Heart left ventricle (tissue), 16 donors: ENCODE measurements at regions of chr5 and their contacts with region 1.

Region 1: DNA sequence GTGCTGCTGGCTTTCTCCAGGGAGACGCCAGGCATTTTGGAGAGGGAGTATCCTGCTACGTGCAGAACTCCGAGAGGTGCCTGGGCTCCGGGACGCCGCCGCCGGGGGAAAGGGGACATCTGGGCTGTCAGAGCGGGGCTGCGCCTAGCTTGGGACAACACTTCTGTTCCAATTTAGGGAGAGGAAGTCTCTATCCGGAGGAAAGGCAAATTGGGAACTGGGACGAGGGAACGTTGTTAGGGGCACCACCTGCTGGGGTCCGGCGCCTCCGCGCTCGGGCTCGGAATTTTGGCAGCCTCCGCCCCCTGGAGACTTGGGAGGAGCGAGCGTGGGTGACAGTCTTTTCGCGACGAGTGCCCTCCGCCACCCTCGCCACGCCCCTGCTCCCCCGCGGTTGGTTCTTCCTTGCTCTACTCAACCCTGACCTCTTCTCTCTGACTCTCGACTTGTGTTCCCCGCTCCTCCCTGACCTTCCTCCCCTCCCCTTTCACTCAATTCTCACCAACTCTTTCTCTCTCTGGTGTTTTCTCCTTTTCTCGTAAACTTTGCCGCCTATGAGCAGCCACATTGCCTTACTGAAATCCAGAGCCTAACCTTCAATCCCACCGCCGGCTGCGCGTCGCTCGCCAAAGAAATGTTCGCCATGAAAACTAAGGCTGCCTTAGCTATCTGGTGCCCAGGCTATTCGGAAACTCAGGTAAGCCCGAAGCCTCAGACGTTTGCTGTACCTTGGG is 1.6 kb downstream of the TSLP start:
- DNase-seq: peak; percentile 57 to 81 (median 76)
- ATAC-seq: peak; percentile 84 to 94 (median 94)
- H3K4me3 ChIP-seq: peak overlapping the region; percentile 32 to 67 (median 54)
- H3K27ac ChIP-seq: peak overlapping the region in 9 of 12 donors; percentile 17 to 64 (median 50)
- H3K4me1 ChIP-seq: peaks cover 0 to 28% (median 8%) of the 10 kb centered on the region in 12 donors
- H3K27me3 ChIP-seq: peaks cover 0 to 56% (median 22%) of the 10 kb centered on the region in 9 donors
- CTCF ChIP-seq: peak in 6 of 12 donors; percentile 8 to 35 (median 12)
- POLR2A ChIP-seq: no peak

Region 2: GRCh38 chr5:110751902-110752762 is 321.0 kb before region 1 on chr5:
- intact Hi-C with region 1: loop called in 8 of 10 experiments (anchors 2 to 10 kb)
- DNase-seq: no peak
- ATAC-seq: no peak
- H3K4me3 ChIP-seq: no peak overlapping the region
- H3K27ac ChIP-seq: no peak overlapping the region
- H3K4me1 ChIP-seq: no peaks in the 10 kb centered on the region
- H3K27me3 ChIP-seq: no peaks in the 10 kb centered on the region
- CTCF ChIP-seq: no peak
- POLR2A ChIP-seq: no peak

Region 3: DNA sequence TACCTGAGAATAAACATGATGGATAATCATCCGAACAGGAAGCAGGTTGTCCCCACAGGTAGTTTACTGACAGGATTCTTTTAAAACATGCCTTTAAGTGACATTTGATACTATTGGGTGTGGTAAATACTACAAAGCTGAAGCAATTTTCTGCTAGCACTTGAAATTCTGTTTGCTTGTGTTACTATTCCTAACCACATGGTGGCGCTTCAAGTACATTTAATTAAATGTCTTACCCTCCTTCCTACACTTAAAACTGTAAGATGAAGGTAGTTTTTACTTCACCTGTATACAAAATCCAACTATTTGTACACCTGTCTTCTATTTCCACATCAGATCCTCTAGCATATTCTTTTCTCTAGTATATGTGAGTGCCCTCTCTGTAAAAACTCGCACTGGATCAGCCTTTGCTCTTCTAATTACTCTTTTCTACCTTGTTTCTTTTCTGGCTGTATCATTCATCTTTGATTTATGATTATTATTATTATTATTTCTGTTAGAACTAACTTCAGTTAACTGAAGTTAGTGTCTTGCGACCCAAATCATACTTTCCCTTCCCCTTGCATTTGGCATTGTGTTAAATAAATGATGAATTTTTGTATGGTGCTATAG is 315.9 kb before region 1 on chr5:
- intact Hi-C with region 1: loop called in 8 of 10 experiments (anchors 2 to 10 kb)
- DNase-seq: no peak
- ATAC-seq: no peak
- H3K4me3 ChIP-seq: no peak overlapping the region
- H3K27ac ChIP-seq: no peak overlapping the region
- H3K4me1 ChIP-seq: no peaks in the 10 kb centered on the region
- H3K27me3 ChIP-seq: no peaks in the 10 kb centered on the region
- CTCF ChIP-seq: peak; percentile 60 to 80 (median 71)
- POLR2A ChIP-seq: no peak

Region 4: DNA sequence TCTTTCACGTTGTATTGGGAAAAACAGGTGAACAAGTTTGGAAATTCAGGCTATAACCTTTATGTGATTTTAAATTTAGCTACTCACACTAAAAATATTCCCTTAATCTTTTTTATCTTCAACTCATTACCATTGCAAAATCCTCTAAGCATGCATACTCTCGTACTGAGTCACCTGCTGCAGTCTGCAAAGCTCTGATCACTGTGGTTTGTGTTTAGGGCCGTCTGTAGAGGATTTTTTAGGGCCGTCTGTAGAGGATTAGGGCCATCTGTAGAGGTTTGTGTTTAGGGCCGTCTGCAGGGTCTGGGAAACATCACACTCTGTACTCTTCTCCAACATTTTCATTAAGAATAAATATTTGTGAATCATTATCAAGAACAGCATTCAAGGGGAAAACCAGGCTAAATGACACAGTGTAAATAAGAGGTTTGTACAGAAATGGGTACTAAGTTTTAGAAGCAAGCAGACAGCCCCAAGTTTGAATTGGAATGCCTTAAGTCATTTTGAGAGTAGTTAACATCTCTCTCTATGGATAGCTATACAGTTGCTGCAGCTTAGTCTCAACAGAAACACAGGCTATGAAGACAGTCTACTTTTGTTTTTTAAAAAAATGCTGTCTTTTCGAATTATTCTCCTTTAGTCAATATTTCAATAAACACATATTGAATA is 156.6 kb before region 1 on chr5:
- intact Hi-C with region 1: loop called in 1 of 10 experiments (anchors 5 kb)
- DNase-seq: no peak
- ATAC-seq: peak; percentile 77 to 87 (median 83)
- H3K4me3 ChIP-seq: no peak overlapping the region
- H3K27ac ChIP-seq: peak overlapping the region in 11 of 12 donors; percentile 52 to 85 (median 71)
- H3K4me1 ChIP-seq: peaks cover 0 to 38% (median 8%) of the 10 kb centered on the region in 12 donors
- H3K27me3 ChIP-seq: no peaks in the 10 kb centered on the region
- CTCF ChIP-seq: no peak
- POLR2A ChIP-seq: no peak

Region 5: DNA sequence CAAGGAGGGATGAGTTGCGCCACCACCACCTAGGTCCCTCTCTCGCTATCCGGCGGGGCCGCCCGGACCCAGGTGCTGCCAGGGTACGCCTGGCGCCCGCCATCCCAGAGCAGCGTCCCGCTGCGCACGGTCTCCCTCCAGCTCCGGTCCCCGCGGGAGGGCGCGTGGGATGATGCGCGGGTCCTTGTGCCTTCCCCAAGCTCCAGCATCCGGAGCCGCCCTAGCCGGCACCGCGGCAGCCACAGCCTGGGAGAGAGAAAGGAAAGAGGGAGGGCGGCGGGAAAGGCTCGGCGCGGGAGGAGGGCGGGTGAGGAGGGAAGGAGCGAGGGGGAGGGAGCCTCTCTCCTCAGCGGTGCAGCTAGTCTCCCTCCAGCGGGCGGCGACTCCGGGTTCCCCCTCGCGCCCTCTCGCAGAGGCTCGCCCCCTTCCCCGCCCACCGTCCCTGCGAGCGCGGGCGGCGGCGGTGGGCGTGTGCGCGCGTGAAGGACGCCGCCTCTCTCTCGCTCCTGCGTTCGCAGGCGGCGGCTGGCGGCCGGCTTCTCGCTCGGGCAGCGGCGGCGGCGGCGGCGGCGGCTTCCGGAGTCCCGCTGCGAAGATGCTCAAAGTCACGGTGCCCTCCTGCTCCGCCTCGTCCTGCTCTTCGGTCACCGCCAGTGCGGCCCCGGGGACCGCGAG is 150.9 kb after region 1 on chr5 and contains the start of gene CAMK4:
- intact Hi-C with region 1: no loop called
- DNase-seq: peak; percentile 54 to 79 (median 58)
- ATAC-seq: peak; percentile 47 to 91 (median 88)
- H3K4me3 ChIP-seq: peak within 1 kb of the TSS; percentile 43 to 67 (median 56)
- H3K27ac ChIP-seq: peak within 1 kb of the TSS in 2 of 12 donors; percentile 19 to 54
- H3K4me1 ChIP-seq: peaks cover 0 to 16% (median 5%) of the 10 kb centered on the region in 12 donors
- H3K27me3 ChIP-seq: peaks cover 0 to 36% (median 14%) of the 10 kb centered on the region in 9 donors
- CTCF ChIP-seq: peak in 3 of 12 donors; percentile 6 to 33 (median 32)
- POLR2A ChIP-seq: no peak
- total RNA-seq, gene CAMK4: 0.02 to 3.7 (median 0.55) TPM in 6 of 9 donors, not detected in the others